Activated T-helper 1 cell treated with anti-CD3 and anti-CD28 coated beads, Interleukin-12 subunit alpha, Interleukin-12 subunit beta, Interleukin-2, Interleukin-4 antibody, amounts not matched to agents 30 ng/mL and 10 ng/mL and 1 ng/mL, durations not matched to agents 14 hours and 24 hours and 36 hours (primary cell): ENCODE measurements at regions of chr12 and their contacts with region 1.

Region 1: GRCh38 chr12:93397412-93397811 is 19.7 kb downstream of the NUDT4 start:
- DNase-seq: no peak
- H3K4me3 Mint-ChIP-seq: no peak overlapping the region
- H3K27ac Mint-ChIP-seq: no peak overlapping the region
- H3K4me1 Mint-ChIP-seq: peaks cover 2% of the 10 kb centered on the region
- H3K27me3 Mint-ChIP-seq: no peaks in the 10 kb centered on the region

Region 2: DNA sequence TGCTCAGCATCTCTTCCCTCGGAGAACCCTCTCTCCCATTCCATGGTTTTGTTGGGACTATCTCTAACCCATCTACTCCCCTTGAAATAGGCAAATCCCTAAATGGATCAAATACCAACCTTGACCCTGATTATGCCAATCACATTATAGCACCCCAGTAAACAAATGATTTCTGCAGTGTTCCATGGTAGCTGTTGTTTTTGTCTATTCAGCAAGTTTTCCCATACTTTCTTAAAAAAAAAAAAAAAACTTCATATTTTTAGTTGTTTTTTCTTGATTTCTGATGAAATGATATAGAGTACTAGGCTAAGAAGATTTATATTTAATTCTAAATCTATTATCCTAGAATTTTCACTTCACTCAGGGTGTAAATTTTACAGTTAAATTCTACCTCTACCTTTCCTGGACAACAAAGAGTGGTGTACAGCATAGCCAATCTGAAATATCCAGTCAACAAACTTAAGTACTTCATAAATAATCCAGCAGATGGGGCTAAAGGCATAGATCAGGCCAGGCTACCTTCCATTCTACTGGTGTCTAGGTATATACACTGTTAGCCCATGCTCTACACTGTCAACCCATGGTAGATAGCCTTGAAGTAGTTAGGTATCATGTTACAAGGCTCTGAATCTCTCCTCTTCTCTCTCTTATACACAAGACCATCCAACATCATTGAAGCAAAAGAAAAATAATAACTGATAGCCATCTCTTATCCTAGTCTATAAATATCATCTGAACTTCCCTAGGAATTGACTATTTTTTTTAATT is 612.4 kb before region 1 on chr12:
- intact Hi-C with region 1: loop called (anchors 1 kb)
- DNase-seq: peak; percentile 5
- H3K4me3 Mint-ChIP-seq: no peak overlapping the region
- H3K27ac Mint-ChIP-seq: no peak overlapping the region
- H3K4me1 Mint-ChIP-seq: peaks cover 4% of the 10 kb centered on the region
- H3K27me3 Mint-ChIP-seq: no peaks in the 10 kb centered on the region

Region 3: DNA sequence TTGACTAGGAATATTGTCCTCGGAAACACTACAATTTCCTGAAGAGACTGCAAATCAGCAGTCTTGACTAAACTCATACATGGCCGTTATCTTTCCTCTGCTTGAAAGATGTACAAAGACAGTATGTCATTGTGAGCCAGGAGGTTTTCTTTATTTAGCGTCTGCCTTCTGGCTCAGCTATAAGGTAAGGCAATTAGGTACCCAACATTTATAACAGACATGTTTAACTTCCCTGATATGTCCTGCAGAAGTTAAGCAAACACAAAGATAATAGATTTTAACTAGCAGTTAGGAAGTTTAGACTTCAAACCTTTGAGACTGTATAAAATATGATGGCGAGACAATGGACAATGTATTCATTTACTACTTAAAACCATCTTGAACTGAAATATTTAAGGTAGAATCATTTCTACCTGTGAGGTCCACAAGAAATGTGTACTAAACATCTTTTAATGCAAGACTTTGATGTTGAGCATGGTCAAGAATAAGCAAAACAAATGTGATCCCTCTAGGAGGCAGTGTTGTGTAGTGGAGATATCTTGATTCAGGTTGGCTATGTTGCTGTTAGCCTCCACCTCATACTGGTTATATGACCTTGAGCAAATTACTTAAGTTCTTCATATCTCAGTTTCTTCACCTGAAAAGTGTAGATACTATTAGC is 372.1 kb before region 1 on chr12:
- intact Hi-C with region 1: loop called (anchors 1 kb)
- DNase-seq: no peak
- H3K4me3 Mint-ChIP-seq: no peak overlapping the region
- H3K27ac Mint-ChIP-seq: no peak overlapping the region
- H3K4me1 Mint-ChIP-seq: no peaks in the 10 kb centered on the region
- H3K27me3 Mint-ChIP-seq: peaks cover 2% of the 10 kb centered on the region

Region 4: GRCh38 chr12:93098077-93098476 is 299.3 kb before region 1 on chr12:
- intact Hi-C with region 1: loop called (anchors 1 kb)
- DNase-seq: peak; percentile 56
- H3K4me3 Mint-ChIP-seq: no peak overlapping the region
- H3K27ac Mint-ChIP-seq: no peak overlapping the region
- H3K4me1 Mint-ChIP-seq: peaks cover 6% of the 10 kb centered on the region
- H3K27me3 Mint-ChIP-seq: no peaks in the 10 kb centered on the region